ENCODE measurements at regions of chr3 and their contacts with region 1.

Region 1: DNA sequence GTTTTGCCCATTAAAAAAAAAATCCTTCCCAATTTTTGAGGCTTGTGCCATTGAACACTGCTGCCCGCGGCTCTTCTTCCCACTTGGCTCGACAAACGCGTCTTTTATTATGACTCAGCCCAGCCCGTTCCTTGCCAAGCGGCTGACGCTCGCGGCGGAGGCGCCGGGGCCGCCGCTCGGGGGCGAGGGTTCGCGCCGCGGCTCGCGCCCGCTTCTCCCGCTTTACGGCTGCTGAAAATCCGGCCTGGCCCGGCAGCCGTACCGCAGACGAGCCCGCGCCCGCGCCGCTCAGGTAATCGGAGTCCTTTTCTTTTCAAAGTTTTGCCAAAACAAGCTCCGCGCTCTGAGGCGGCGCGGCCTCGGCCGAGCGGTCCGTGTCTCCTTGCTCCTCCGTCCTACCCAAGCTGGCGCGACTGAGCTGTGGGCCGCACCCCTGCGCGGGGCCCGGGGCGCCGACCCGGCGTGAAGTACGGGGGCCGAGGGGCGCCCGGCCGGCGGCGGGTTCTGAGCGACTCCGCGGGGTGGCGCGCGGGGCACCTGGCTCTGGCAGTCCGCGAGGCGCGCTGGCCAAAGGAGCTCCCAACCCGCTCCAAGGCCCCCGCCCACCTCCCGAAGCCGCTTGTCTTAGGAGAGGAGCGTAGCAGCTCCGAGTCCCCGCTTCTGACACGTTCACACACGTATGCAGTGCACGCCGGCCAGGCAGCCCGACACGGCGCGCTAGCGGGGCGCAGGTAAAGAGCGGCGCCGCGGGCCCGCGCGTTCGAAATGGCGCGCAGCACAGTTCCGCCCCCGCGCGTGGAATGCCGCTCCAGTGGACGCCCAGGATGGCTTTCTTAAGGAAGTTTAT is 418.2 kb upstream of the NAALADL2 start:
- DNase-seq: peak; percentile 87
- H3K4me3 ChIP-seq: peak overlapping the region; percentile 61 to 98 (median 83)
- H3K27ac ChIP-seq: peak overlapping the region; percentile 78
- H3K4me1 ChIP-seq: peaks cover 19% of the 10 kb centered on the region
- H3K27me3 ChIP-seq: no peaks in the 10 kb centered on the region
- CTCF ChIP-seq: peak in 1 of 2 donors; percentile 6

Region 2: GRCh38 chr3:174202561-174202960 is 238.4 kb before region 1 on chr3:
- CTCF ChIA-PET with region 1: no interaction called
- dilution Hi-C with region 1: no loop called
- in situ Hi-C with region 1: no loop called
- intact Hi-C with region 1: no loop called
- DNase-seq: no peak
- H3K4me3 ChIP-seq: no peak overlapping the region
- H3K27ac ChIP-seq: no peak overlapping the region
- H3K4me1 ChIP-seq: no peaks in the 10 kb centered on the region
- H3K27me3 ChIP-seq: no peaks in the 10 kb centered on the region
- CTCF ChIP-seq: no peak

Region 3: GRCh38 chr3:174505266-174505665 is 64.3 kb after region 1 on chr3:
- CTCF ChIA-PET with region 1: no interaction called
- dilution Hi-C with region 1: loop called (anchors 5 kb)
- in situ Hi-C with region 1: no loop called
- intact Hi-C with region 1: no loop called
- DNase-seq: no peak
- H3K4me3 ChIP-seq: no peak overlapping the region
- H3K27ac ChIP-seq: no peak overlapping the region
- H3K4me1 ChIP-seq: no peaks in the 10 kb centered on the region
- H3K27me3 ChIP-seq: no peaks in the 10 kb centered on the region
- CTCF ChIP-seq: no peak

Region 4: GRCh38 chr3:174533286-174533685 is 92.3 kb after region 1 on chr3:
- CTCF ChIA-PET with region 1: no interaction called
- dilution Hi-C with region 1: no loop called
- in situ Hi-C with region 1: no loop called
- intact Hi-C with region 1: loop called (anchors 1 kb)
- DNase-seq: peak; percentile 72
- H3K4me3 ChIP-seq: no peak overlapping the region
- H3K27ac ChIP-seq: no peak overlapping the region
- H3K4me1 ChIP-seq: peaks cover 13% of the 10 kb centered on the region
- H3K27me3 ChIP-seq: no peaks in the 10 kb centered on the region
- CTCF ChIP-seq: no peak

Measured in mammary epithelial cell (primary cell).